ENCODE measurements at regions of chr10 and their contacts with region 1.

Region 1: DNA sequence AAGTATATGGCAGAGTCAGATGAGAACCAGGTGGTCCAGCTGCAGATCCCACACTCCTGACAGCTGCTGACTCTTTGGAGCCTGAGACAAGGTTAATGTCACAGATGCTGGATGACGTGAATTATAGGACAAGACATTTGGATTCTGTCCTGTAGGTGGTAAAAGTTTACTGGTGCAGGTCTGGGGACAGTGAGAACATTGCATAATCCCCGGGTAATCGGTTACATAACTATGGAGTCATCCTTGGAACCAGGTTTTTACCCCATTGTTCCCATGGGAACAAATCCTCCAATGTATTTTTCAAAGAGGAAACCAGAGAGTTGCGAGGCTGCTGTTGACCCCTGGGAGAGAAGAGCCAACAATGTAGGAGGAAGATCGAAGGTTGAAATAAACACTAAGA is 27.5 kb upstream of the ZCCHC24 start:
- DNase-seq: no peak
- H3K4me3 ChIP-seq: no peak overlapping the region
- CTCF ChIP-seq: no peak

Region 2: DNA sequence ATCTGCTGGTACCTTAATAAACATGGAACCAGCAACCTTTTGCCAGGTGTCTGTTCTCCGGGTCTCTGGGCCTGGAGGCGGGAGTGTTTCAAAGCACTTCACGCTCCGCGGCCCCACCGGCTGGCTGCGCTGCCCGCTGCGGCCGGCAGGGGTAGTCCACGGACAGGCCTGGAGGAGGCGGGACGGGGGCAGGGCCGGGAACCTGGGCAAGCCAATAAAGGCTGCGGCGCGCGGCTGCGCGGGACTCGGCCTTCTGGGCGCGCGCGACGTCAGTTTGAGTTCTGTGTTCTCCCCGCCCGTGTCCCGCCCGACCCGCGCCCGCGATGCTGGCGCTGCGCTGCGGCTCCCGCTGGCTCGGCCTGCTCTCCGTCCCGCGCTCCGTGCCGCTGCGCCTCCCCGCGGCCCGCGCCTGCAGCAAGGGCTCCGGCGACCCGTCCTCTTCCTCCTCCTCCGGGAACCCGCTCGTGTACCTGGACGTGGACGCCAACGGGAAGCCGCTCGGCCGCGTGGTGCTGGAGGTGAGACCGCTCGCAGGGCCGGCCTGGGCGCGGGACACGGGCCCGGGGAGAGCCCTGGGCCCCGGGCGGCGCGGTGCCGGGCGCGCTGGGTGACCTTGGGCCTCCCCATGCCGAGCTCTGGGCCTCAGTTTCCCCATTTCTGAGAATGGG is 125.6 kb before region 1 on chr10 and contains the start of gene PPIF:
- CTCF ChIA-PET with region 1: interaction called, 28 read pairs
- POLR2A ChIA-PET with region 1: no interaction called
- DNase-seq: no peak
- H3K4me3 ChIP-seq: peak within 1 kb of the TSS; percentile 86
- CTCF ChIP-seq: peak; percentile 95

Region 3: GRCh38 chr10:79374312-79375191 is 98.4 kb before region 1 on chr10:
- CTCF ChIA-PET with region 1: interaction called, 106 read pairs
- POLR2A ChIA-PET with region 1: no interaction called
- DNase-seq: no peak
- H3K4me3 ChIP-seq: no peak overlapping the region
- CTCF ChIP-seq: peak; percentile 94

Region 4: GRCh38 chr10:79390551-79391209 is 82.3 kb before region 1 on chr10:
- CTCF ChIA-PET with region 1: interaction called, 10 read pairs
- POLR2A ChIA-PET with region 1: no interaction called
- DNase-seq: no peak
- H3K4me3 ChIP-seq: no peak overlapping the region
- CTCF ChIP-seq: no peak

Region 5: DNA sequence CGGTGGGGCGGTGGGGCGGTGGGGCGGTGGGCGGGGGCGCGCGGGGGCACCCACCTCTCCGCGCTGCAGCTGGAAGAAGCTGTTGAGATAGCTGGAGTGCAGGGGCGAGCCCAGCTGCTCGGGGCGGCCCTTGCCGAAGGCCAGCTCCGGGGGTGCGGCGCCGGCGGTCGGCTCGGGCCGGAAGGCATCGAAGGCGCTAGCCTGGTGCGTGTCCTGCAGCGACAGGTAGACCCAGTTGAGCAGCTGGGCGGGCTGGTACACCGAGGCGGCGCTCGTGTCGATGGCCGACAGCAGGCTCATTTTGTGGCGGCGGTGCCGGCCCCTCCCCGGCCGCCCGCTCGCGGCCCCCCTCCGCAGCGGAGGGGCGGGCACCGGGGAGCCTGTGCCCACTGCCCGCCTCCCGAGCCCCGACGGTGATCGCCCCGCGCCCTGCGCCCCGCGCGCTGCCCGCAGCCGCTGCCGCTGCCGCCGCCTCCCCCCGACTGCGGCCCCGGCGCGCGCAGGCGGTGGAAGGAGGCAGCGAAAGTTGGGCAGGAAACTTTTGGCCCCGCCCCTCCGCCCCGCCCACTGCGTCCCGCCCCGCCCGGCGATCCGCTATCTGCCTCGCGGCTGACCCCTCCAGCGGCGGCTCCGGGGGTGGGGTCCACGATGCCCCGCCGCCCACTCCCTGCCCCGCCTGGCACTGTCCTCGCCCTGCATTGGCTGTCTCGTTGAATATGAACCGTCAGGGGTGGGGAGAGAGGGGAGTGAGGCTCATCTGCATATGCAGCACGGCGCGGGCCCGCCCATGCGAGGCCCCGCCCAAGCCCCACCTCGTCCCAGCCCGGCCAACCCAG is 27.6 kb before region 1 on chr10 and contains the start of gene ZCCHC24:
- CTCF ChIA-PET with region 1: interaction called, 15 read pairs
- POLR2A ChIA-PET with region 1: interaction called, 5 read pairs
- DNase-seq: peak; percentile 85
- H3K4me3 ChIP-seq: peak within 1 kb of the TSS; percentile 79
- CTCF ChIP-seq: no peak

Region 6: DNA sequence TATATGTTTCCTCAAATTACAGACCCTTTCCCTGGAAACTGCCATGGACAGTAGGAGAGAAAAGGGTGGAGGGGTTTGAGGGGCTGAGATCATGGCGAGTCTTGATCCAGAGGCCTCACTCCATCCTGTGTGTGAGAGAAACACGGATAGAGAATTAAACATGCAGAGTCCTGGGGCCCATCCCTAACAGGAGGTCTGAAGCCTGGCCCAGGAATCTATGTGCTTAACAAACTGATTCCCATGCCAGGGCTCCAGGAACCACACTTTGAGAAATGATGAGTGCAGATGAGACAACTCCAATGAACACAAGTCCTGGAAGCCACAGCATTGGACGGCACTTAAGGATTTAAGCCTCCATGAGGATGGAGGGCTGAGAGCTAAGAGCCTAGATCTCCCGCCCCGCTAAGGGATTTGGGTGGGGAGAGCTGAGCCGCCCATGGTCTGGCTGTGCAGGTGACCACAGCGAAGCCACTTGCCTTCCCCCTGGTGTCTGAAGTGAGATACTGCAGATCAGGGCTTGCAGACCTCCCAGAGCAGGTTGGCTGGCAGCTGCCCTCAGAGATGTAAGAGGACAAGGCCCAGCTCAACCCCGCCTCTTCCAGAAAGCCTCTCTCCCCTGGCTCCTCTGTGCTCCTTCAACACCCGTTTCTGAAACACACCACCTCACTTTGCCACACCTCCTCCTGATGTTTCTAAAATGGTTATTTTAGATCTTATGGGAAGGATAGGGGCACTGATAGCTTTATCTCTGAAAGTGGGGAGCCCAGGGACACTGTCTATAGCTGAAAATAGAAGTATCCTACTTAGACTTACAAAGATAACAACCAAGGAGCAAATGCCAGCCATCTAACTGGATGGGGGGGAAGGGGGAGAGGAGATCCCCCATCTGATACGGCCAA is 14.6 kb after region 1 on chr10:
- CTCF ChIA-PET with region 1: interaction called, 165 read pairs
- POLR2A ChIA-PET with region 1: no interaction called
- DNase-seq: no peak
- H3K4me3 ChIP-seq: no peak overlapping the region
- CTCF ChIP-seq: peak; percentile 70

Region 7: DNA sequence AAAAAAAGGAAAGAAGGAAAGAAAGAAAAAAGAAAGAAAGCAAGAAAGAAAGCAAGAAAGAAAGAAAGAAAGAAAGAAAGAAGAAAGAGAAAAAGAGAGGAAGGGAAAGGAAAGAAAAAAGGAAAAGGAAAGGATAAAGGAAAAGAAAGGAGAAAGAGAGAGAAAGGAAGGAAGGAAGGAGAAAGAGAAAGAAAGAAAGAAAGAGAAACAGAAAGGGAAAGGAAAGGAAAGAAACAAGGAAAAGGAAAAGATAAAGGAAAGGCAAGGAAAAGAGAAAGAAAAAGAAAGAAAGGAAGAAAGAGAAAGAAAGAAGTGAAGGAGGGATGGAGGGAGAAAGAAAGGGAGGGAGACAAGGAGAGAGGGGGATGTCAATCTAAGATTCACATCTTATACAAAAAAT is 108.1 kb after region 1 on chr10:
- CTCF ChIA-PET with region 1: no interaction called
- POLR2A ChIA-PET with region 1: no interaction called
- DNase-seq: no peak
- H3K4me3 ChIP-seq: no peak overlapping the region
- CTCF ChIP-seq: no peak